ENCODE measurements at regions of chr19 and their contacts with region 1.

Region 1: GRCh38 chr19:9078651-9079050 is 8.2 kb upstream of the OR1M1 start:
- DNase-seq: no peak
- H3K4me3 ChIP-seq: no peak overlapping the region
- H3K27me3 ChIP-seq: no peaks in the 10 kb centered on the region
- CTCF ChIP-seq: no peak

Region 2: GRCh38 chr19:8654591-8655339 is 423.9 kb before region 1 on chr19:
- CTCF ChIA-PET with region 1: interaction called, 11 read pairs
- POLR2A ChIA-PET with region 1: no interaction called
- DNase-seq: no peak
- H3K4me3 ChIP-seq: 0 out of 2 replicates have a peak overlapping the region, but pooled peaks have one; percentile 11
- H3K27me3 ChIP-seq: no peaks in the 10 kb centered on the region
- CTCF ChIP-seq: peak; percentile 95

Region 3: GRCh38 chr19:8988204-8988603 is 90.4 kb before region 1 on chr19:
- CTCF ChIA-PET with region 1: no interaction called
- POLR2A ChIA-PET with region 1: no interaction called
- DNase-seq: no peak
- H3K4me3 ChIP-seq: no peak overlapping the region
- H3K27me3 ChIP-seq: no peaks in the 10 kb centered on the region
- CTCF ChIP-seq: no peak

Region 4: GRCh38 chr19:9060564-9061340 is 17.9 kb before region 1 on chr19:
- CTCF ChIA-PET with region 1: no interaction called
- POLR2A ChIA-PET with region 1: no interaction called
- DNase-seq: no peak
- H3K4me3 ChIP-seq: no peak overlapping the region
- H3K27me3 ChIP-seq: no peaks in the 10 kb centered on the region
- CTCF ChIP-seq: no peak

Region 5: GRCh38 chr19:9107375-9107774 is 28.7 kb after region 1 on chr19 and contains the start of gene OR7G2:
- CTCF ChIA-PET with region 1: no interaction called
- POLR2A ChIA-PET with region 1: no interaction called
- DNase-seq: no peak
- H3K4me3 ChIP-seq: no peak within 1 kb of the TSS
- H3K27me3 ChIP-seq: no peaks in the 10 kb centered on the region
- CTCF ChIP-seq: no peak
- polyA plus RNA-seq, gene OR7G2: not detected in 2 replicates

Region 6: DNA sequence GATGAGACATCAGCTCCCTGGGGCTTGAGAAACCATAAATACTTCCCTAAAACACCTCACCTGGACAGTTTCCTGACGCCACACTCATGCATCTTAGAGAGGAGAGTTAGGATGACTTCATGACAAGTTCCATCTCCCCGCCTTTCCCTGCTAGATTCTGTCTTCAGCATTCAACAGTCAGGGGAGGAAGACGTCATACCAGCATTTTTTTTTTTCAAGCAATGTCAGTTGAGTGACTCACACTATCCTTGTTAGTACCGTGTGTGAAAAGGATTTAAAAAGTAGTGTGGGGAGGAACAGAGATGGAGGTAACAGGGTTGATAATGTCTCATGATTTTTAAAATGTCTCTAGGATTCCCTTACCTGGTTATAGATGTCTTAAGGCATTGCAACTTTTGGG is 100.2 kb after region 1 on chr19 and contains the start of gene OR7D2:
- CTCF ChIA-PET with region 1: no interaction called
- POLR2A ChIA-PET with region 1: no interaction called
- DNase-seq: no peak
- H3K4me3 ChIP-seq: no peak within 1 kb of the TSS
- H3K27me3 ChIP-seq: no peaks in the 10 kb centered on the region
- CTCF ChIP-seq: no peak
- polyA plus RNA-seq, gene OR7D2: not detected in 2 replicates